PC-3 (cell line): ENCODE measurements at regions of chr1 and their contacts with region 1.

Region 1: DNA sequence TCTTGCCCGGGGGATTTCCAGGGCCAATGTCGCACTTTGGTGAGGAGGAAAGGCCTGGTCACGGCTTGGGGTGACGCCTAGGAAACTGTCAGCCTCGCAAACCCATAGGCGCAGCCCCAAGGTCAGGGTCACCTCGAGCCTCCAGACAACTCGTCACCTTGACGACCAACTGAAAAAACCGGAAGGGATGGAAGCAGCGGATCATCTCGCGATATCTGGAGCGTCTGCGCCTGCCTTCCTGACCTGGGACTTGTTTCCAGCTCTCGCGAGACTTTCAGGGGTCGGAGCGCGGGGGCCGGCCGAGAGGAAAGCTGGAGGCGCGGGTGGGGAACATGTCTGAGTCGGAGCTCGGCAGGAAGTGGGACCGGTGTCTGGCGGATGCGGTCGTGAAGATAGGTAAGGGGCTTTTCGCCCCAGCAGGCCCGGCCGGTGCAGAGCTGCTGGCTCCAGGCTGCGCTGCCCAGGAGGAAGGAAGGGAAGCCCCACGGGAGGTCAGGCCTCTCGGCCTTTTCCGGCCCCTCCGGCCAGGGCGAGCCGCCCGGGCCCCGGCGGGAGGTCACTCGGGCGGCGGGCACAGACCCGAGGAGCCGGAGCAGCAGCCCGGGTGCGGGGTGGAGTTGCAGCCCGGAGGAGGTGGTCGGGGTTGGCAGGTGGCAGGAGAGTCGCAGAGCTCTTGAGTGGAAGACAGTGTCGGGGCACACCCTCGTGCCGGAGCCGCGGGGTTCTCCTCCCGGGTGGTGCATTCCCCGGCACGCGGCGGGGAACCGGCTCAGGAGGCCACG is 47.2 kb upstream of the NBL1 start:
- DNase-seq: peak; percentile 96
- ATAC-seq: peak; percentile 94
- H3K4me3 ChIP-seq: peak overlapping the region; percentile 90
- H3K27ac ChIP-seq: peak overlapping the region; percentile 79
- H3K4me1 ChIP-seq: peaks cover 19% of the 10 kb centered on the region
- H3K27me3 ChIP-seq: no peaks in the 10 kb centered on the region
- CTCF ChIP-seq: no peak

Region 2: GRCh38 chr1:19525607-19526545 is 71.0 kb before region 1 on chr1:
- CTCF ChIA-PET with region 1: no interaction called
- POLR2A ChIA-PET with region 1: no interaction called
- intact Hi-C with region 1: no loop called
- DNase-seq: peak; percentile 66
- ATAC-seq: peak; percentile 97
- H3K4me3 ChIP-seq: no peak overlapping the region
- H3K27ac ChIP-seq: peak overlapping the region; percentile 70
- H3K4me1 ChIP-seq: peaks cover 18% of the 10 kb centered on the region
- H3K27me3 ChIP-seq: no peaks in the 10 kb centered on the region
- CTCF ChIP-seq: no peak

Region 3: DNA sequence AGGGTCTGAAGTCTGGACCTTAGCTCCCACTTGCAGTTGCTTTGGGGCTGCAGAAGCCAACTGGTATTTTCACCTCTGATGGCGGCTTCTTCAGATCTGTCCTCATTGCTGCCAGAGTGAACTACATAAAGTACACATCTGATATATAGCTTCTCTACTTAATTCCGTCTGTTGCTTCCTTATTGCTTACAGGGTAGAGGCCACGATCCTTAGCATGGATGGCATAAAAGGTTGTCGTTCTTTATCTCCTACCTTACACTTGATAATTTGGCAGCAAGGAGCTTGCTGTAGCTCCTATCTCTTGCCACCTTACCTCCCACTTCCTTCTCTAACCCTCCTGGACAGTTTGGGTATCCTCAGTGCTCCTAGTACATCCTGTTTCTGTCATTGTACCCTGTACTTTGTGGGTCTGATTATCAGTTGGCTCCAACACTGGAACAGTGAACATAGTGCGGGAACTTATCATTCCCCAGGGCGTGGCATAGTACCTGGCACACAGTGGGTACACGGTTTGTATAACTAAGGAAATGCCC is 16.3 kb after region 1 on chr1:
- CTCF ChIA-PET with region 1: no interaction called
- POLR2A ChIA-PET with region 1: no interaction called
- intact Hi-C with region 1: no loop called
- DNase-seq: no peak
- ATAC-seq: no peak
- H3K4me3 ChIP-seq: no peak overlapping the region
- H3K27ac ChIP-seq: no peak overlapping the region
- H3K4me1 ChIP-seq: peaks cover 14% of the 10 kb centered on the region
- H3K27me3 ChIP-seq: no peaks in the 10 kb centered on the region
- CTCF ChIP-seq: no peak

Region 4: GRCh38 chr1:19643602-19644394 is 46.9 kb after region 1 on chr1 and contains the start of gene NBL1:
- CTCF ChIA-PET with region 1: no interaction called
- POLR2A ChIA-PET with region 1: no interaction called
- intact Hi-C with region 1: loop called (anchors 1 kb)
- DNase-seq: peak; percentile 62
- ATAC-seq: peak; percentile 60
- H3K4me3 ChIP-seq: peak within 1 kb of the TSS; percentile 100
- H3K27ac ChIP-seq: peak within 1 kb of the TSS; percentile 51
- H3K4me1 ChIP-seq: peaks cover 41% of the 10 kb centered on the region
- H3K27me3 ChIP-seq: no peaks in the 10 kb centered on the region
- CTCF ChIP-seq: no peak
- total RNA-seq, gene NBL1: 117 and 141 TPM in 2 replicates